Posterior cingulate gyrus (tissue), 11 donors: ENCODE measurements at regions of chr12 and their contacts with region 1.

Region 1: GRCh38 chr12:68440068-68440581 is 108.0 kb upstream of the MDM1 start:
- DNase-seq: no peak

Region 2: DNA sequence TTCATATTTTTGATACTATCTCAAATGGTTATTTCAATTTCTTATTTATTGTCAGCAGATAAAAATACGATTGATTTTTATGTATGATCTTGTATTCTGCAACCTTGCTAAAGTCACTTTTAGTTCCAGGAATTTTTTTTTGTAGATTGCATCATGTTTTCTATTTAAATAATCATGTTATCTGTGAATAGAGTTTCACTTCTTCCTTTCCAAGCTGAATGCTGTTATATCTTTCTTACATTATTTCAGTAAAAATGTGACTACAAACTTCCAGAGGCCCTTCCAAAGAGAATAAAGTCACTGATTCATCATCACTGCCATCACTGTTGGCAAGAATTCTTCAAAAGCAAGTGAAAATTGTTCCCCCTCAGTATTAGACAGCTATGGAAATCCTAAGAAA is 65.8 kb after region 1 on chr12:
- intact Hi-C with region 1: loop called (anchors 10 kb)
- DNase-seq: no peak